PC-3 (cell line): ENCODE measurements at regions of chr7 and their contacts with region 1.

Region 1: GRCh38 chr7:151519765-151520418 is at the start of gene RHEB:
- DNase-seq: peak; percentile 98
- ATAC-seq: peak; percentile 84
- H3K4me3 ChIP-seq: peak within 1 kb of the TSS; percentile 91
- H3K27ac ChIP-seq: peak within 1 kb of the TSS; percentile 94
- H3K4me1 ChIP-seq: peaks cover 30% of the 10 kb centered on the region
- H3K27me3 ChIP-seq: no peaks in the 10 kb centered on the region
- CTCF ChIP-seq: no peak
- total RNA-seq, gene RHEB: 87.0 and 99.3 TPM in 2 replicates

Region 2: DNA sequence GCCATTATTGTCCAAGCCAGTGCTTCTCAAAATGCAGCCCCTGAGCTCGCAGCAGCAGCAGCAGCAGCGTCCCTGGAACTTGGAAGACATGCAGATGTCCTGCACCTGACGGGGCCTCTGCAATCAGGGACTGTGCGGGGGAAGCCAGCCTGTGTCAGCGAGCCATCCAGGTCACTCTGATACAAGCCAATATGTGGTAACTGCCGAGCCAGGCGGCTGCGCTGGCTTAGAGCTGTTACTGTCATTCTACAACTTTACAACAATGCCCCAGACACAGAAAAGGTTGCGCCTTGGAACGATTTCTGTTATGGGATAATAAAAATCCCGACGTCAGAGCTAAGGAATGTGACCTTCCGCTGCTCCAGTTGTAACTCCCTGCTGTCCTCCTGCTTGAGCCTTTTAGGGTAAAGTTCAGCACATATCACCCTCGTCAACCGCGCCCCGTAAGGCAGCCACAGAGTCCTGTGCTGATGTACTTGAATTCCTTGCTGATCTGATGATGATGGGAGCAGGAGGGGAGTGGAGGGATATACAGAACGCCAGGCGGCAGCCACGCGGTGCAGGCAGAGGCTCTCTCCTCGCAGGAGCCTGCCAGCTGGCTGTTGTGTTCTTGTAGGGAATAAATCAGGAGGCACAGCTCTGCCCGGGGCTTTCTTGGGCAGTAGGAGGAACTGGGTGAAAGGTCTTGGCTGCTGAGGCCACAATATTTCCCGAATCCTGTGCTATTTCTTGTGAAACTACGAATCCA is 60.0 kb before region 1 on chr7:
- CTCF ChIA-PET with region 1: interaction called, 5 read pairs
- POLR2A ChIA-PET with region 1: interaction called, 4 read pairs
- intact Hi-C with region 1: loop called (anchors 1 kb)
- DNase-seq: peak; percentile 92
- ATAC-seq: peak; percentile 85
- H3K4me3 ChIP-seq: peak overlapping the region; percentile 64
- H3K27ac ChIP-seq: peak overlapping the region; percentile 70
- H3K4me1 ChIP-seq: peaks cover 22% of the 10 kb centered on the region
- H3K27me3 ChIP-seq: no peaks in the 10 kb centered on the region
- CTCF ChIP-seq: peak; percentile 34; the same call in 1 of the 2 replicates

Region 3: GRCh38 chr7:151494301-151495284 is 25.3 kb before region 1 on chr7:
- CTCF ChIA-PET with region 1: no interaction called
- POLR2A ChIA-PET with region 1: no interaction called
- intact Hi-C with region 1: loop called (anchors 2 kb)
- DNase-seq: peak; percentile 53
- ATAC-seq: peak; percentile 58
- H3K4me3 ChIP-seq: no peak overlapping the region
- H3K27ac ChIP-seq: peak overlapping the region; percentile 7; the same call in 1 of the 2 replicates
- H3K4me1 ChIP-seq: peaks cover 47% of the 10 kb centered on the region
- H3K27me3 ChIP-seq: no peaks in the 10 kb centered on the region
- CTCF ChIP-seq: no peak